Naive thymus-derived CD4-positive, alpha-beta T cell (primary cell): ENCODE measurements at regions of chr7 and their contacts with region 1.

Region 1: DNA sequence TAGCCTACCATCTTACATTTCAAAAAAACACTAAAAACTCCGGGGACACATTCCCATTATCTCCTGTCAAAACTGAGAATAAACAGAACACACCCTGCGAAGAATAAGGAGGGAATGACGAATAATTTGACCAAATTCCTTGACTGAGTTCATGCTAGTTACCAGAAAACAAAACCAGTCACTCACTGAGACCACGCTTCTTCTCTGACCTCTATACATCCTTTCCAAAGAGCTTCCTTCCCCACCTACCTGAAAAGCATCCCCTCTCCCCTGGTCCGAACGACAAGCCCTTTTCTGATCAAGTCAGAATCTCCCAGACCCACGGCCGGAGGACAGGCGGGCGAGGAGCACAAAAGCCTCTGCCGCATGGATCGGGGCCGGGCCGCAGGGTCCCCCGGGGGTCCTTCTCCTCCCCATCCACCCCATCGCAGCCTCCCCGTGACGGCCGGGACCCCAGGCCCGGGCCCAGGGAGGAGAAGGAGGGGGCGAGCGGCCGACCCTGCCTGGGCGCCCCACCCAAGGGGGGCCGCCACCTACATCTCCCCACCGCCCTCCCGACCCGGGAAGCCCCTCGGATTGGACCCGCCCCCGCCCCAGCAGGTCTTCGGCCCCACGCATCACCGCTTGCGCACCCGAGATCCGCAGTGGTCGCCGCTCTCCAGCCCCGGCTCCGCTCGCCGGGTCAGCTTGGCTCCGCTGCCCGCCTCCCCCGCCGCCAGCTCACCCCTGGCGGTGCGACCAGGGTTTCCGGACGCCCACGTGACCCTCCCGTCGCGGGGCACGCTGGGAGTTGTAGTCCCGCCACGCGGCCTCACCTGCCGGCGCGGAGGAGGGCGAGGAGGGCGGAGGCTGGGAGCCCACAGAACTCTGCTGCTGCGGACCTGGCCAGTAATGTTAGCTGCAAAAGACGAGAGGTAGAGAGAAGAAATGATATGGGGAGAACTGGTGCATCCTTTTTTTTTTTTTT is at the start of gene SLC37A3:
- DNase-seq: peak; percentile 74 to 93 (median 80)
- ATAC-seq: peak; percentile 97
- H3K4me3 ChIP-seq: peak within 1 kb of the TSS; percentile 67
- H3K4me3 Mint-ChIP-seq: peak within 1 kb of the TSS; percentile 79 to 95 (median 90)
- H3K27ac ChIP-seq: peak within 1 kb of the TSS; percentile 84
- H3K27ac Mint-ChIP-seq: peak within 1 kb of the TSS; percentile 14 to 92 (median 85)
- H3K4me1 ChIP-seq: peaks cover 0 to 15% of the 10 kb centered on the region in 2 donors
- H3K4me1 Mint-ChIP-seq: peaks cover 22 to 41% (median 31%) of the 10 kb centered on the region in 7 donors
- H3K27me3 ChIP-seq: no peaks in the 10 kb centered on the region
- H3K27me3 Mint-ChIP-seq: no peaks in the 10 kb centered on the region
- total RNA-seq, gene SLC37A3: 26.8 to 72.7 (median 39.4) TPM

Region 2: GRCh38 chr7:140439359-140439758 is 41.3 kb after region 1 on chr7:
- CTCF ChIA-PET with region 1: no interaction called
- POLR2A ChIA-PET with region 1: interaction called, 7 read pairs
- intact Hi-C with region 1: loop called (anchors 2 to 5 kb)
- DNase-seq: no peak
- ATAC-seq: no peak
- H3K4me3 ChIP-seq: no peak overlapping the region
- H3K4me3 Mint-ChIP-seq: no peak overlapping the region
- H3K27ac ChIP-seq: no peak overlapping the region
- H3K27ac Mint-ChIP-seq: no peak overlapping the region
- H3K4me1 ChIP-seq: no peaks in the 10 kb centered on the region
- H3K4me1 Mint-ChIP-seq: peaks cover 0 to 11% (median 0%) of the 10 kb centered on the region in 7 donors
- H3K27me3 ChIP-seq: no peaks in the 10 kb centered on the region
- H3K27me3 Mint-ChIP-seq: peaks cover 0 to 7% (median 0%) of the 10 kb centered on the region in 5 donors